Adrenal gland (tissue), 19 donors: ENCODE measurements at regions of chr3 and their contacts with region 1.

Region 1: GRCh38 chr3:33131331-33132018 is 17.7 kb downstream of the CRTAP start:
- DNase-seq: peak; percentile 42 to 74 (median 50)
- H3K4me3 ChIP-seq: no peak overlapping the region
- H3K27ac ChIP-seq: no peak overlapping the region
- H3K4me1 ChIP-seq: no peaks in the 10 kb centered on the region
- H3K27me3 ChIP-seq: no peaks in the 10 kb centered on the region
- CTCF ChIP-seq: peak; percentile 66 to 77 (median 72)
- POLR2A ChIP-seq: no peak

Region 2: DNA sequence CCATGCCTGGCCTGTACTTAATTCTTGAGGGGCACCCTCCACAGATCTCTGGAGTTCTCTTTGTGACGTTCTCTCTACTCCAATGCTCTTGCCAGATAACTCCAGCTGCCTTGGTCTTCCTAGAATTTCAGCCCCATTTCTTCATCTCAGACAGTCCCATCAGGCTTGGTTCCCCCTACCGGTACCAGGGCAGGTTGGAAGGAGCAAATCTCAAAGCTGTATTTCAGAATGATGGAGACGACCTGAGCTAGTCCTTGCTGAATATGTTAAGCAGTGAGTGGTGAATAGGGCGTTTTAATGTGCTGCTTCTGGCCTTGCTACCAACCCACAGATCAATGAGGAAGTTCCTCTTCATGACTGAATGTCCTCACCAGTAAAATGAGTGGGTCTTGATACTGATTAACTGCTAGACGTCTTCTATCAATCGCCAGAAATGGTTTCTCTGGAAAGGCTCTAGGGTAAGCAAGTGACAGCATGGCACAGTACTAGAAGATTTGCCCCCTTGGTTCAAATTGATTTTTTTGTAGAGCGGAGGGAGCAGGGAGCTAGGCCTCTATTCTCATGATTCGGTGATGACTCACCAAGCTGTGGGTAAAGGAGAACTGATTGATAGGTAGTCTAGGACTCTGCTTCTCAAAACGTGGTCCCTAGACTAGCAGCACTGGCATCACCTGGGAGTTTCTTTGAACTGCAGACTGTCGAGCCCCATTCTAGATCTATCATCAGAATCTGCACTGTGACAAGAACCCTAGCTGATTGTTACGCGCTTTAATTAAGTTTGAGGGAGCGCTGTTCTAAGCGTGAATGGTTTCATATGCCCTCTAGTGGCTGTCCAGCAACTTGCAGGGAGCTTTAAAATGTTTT is 241.0 kb after region 1 on chr3:
- intact Hi-C with region 1: loop called (anchors 5 kb)
- DNase-seq: peak in 5 of 7 donors; percentile 21 to 75 (median 52)
- H3K4me3 ChIP-seq: peak overlapping the region in 1 of 4 donors; percentile 33
- H3K27ac ChIP-seq: no peak overlapping the region
- H3K4me1 ChIP-seq: no peaks in the 10 kb centered on the region
- H3K27me3 ChIP-seq: no peaks in the 10 kb centered on the region
- CTCF ChIP-seq: peak in 5 of 6 experiments; percentile 83 to 96 (median 90)
- POLR2A ChIP-seq: no peak

Region 3: GRCh38 chr3:33377926-33378325 is 246.5 kb after region 1 on chr3:
- intact Hi-C with region 1: loop called (anchors 5 kb)
- DNase-seq: peak in 1 of 7 donors; percentile 19
- H3K4me3 ChIP-seq: no peak overlapping the region
- H3K27ac ChIP-seq: no peak overlapping the region
- H3K4me1 ChIP-seq: no peaks in the 10 kb centered on the region
- H3K27me3 ChIP-seq: no peaks in the 10 kb centered on the region
- CTCF ChIP-seq: no peak
- POLR2A ChIP-seq: no peak